Vagina (tissue), 2 donors: ENCODE measurements at regions of chr1 and their contacts with region 1.

Region 1: DNA sequence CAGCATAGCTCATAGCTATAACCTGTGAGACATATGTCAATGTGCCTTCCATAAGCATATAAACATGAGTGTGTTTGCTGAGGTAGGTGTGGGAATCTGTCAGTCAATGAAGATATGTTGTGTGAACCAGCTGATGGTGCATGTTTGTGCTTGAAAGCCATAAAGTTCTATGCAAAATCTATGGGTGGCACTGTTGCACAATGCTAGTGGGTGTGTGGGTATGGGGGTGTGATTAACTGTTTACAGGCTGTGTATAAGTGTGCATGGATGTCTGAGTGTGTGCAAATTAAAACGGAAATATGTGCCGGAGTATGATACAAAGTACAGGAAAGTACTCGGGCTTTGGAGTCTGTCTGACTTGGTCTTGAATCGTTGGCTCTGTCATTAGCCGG is 1.0 kb upstream of the ATP2B4 start:
- DNase-seq: peak in 1 of 2 donors; percentile 91
- H3K4me3 ChIP-seq: peak overlapping the region; percentile 58 to 88
- H3K27ac ChIP-seq: peak overlapping the region; percentile 94
- H3K4me1 ChIP-seq: peaks cover 49% of the 10 kb centered on the region
- H3K27me3 ChIP-seq: no peaks in the 10 kb centered on the region
- CTCF ChIP-seq: peak in 2 of 3 experiments; percentile 28 to 29
- POLR2A ChIP-seq: no peak

Region 2: DNA sequence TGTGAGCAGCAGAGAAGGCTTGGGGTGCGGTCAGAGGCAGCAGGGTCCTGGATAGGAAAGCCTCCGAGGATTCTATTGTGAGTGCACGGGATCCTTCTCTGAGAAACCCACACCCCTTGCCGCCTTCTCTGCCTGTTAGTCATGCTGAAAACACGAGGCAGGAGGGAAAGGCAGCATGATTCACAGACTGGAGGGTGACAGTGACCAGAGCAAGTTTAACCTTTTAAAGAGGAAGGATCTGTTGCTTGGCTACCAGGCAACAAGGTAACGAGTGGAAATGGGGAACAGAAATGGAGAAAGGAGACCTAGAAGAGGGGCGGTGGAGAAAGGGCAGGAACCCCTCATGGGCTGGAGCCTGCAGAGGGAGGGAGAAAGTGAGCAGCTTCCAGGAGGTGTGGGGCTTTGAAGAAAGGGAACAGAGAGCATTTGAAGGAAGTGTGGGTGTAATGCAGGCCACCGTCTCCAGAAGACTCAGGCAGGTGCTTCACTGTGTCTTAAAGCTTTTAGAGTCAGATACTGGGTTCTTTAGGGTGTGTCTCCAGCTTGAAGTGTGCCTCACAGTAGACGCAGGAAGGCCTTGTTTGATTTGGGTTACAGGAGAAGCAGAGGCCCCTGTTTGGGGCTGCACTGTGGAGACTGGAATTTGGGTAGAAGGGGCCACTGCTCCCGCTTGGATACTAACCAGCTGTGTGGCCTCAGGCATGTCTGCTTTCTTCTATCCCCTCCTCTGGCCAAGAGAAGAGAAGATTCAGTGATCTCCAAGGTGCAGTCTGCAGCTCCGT is 112.6 kb before region 1 on chr1:
- intact Hi-C with region 1: loop called (anchors 5 kb)
- DNase-seq: no peak
- H3K4me3 ChIP-seq: no peak overlapping the region
- H3K27ac ChIP-seq: peak overlapping the region; percentile 83
- H3K4me1 ChIP-seq: peaks cover 44% of the 10 kb centered on the region
- H3K27me3 ChIP-seq: no peaks in the 10 kb centered on the region
- CTCF ChIP-seq: no peak
- POLR2A ChIP-seq: no peak

Region 3: GRCh38 chr1:203558064-203558760 is 67.4 kb before region 1 on chr1:
- intact Hi-C with region 1: loop called (anchors 5 kb)
- DNase-seq: peak in 1 of 2 donors; percentile 91
- H3K4me3 ChIP-seq: no peak overlapping the region
- H3K27ac ChIP-seq: peak overlapping the region; percentile 91
- H3K4me1 ChIP-seq: peaks cover 56% of the 10 kb centered on the region
- H3K27me3 ChIP-seq: no peaks in the 10 kb centered on the region
- CTCF ChIP-seq: peak in 1 of 3 experiments; percentile 6
- POLR2A ChIP-seq: no peak

Region 4: GRCh38 chr1:203669739-203670138 is 44.1 kb after region 1 on chr1:
- intact Hi-C with region 1: loop called (anchors 5 kb)
- DNase-seq: no peak
- H3K4me3 ChIP-seq: no peak overlapping the region
- H3K27ac ChIP-seq: peak overlapping the region; percentile 81
- H3K4me1 ChIP-seq: peaks cover 97% of the 10 kb centered on the region
- H3K27me3 ChIP-seq: no peaks in the 10 kb centered on the region
- CTCF ChIP-seq: no peak
- POLR2A ChIP-seq: no peak

Region 5: DNA sequence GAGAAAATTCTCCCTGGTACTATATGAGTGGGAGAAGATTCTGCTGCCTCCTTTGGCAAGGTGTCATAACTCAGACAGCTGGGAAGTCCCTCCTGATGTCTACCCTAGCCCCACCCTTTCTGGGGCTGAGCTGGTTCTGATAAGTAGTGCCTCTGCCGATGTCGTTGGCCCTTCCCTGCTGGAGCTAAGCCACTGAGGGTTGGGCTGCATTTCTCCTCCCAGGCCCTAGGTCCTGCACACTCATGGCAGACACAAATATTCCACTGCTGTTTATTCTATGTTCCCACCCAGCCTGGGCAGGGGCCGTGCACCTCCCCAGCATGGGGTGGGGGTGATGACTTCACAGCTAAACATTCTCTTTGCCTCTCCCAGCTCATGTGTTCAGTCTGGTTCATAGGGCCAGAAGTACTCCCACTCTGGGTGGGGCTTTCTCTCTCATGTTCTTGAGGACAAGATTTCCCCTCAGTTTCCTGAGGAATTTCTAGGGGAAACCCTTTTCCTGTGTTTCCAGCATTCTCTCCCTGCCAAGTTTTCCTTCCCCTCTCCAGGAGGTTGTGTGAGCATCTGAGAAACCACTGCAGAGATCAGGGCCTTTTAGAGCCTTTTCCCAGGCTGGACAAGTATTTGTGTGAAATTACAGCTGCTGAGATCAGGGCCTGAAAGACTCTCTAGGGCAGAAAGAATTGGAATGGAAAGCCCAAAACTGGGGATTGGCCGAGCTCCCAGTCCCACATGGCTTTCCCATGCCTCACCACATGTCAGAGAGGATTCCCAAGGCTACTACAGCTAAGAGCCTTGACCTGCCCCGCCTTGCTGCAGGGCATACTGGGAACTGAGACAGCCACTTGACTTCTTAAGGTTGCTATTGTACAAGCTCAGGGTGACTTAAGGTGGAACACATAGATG is 67.2 kb after region 1 on chr1:
- intact Hi-C with region 1: loop called (anchors 2 kb)
- DNase-seq: peak in 1 of 2 donors; percentile 96
- H3K4me3 ChIP-seq: no peak overlapping the region
- H3K27ac ChIP-seq: peak overlapping the region; percentile 87
- H3K4me1 ChIP-seq: peaks cover 75% of the 10 kb centered on the region
- H3K27me3 ChIP-seq: no peaks in the 10 kb centered on the region
- CTCF ChIP-seq: no peak
- POLR2A ChIP-seq: no peak